HepG2 (cell line): ENCODE measurements at regions of chr2 and their contacts with region 1.

Region 1: GRCh38 chr2:129129096-129129495 is 810.4 kb upstream of the HS6ST1 start:
- DNase-seq: no peak
- ATAC-seq: no peak
- H3K4me3 ChIP-seq: no peak overlapping the region
- H3K27ac ChIP-seq: no peak overlapping the region
- H3K4me1 ChIP-seq: no peaks in the 10 kb centered on the region
- H3K27me3 ChIP-seq: peaks cover 0 to 3% of the 10 kb centered on the region in 2 experiments; a peak in 1 of 5 replicates
- CTCF ChIP-seq: no peak
- EP300 ChIP-seq: no peak
- POLR2A ChIP-seq: no peak
- RAD21 ChIP-seq: no peak

Region 2: GRCh38 chr2:129144082-129144791 is 15.1 kb after region 1 on chr2:
- CTCF ChIA-PET with region 1: no interaction called
- POLR2A ChIA-PET with region 1: no interaction called
- in situ Hi-C with region 1: no loop called
- intact Hi-C with region 1: loop called (anchors 1 kb)
- DNase-seq: no peak
- ATAC-seq: no peak
- H3K4me3 ChIP-seq: no peak overlapping the region
- H3K27ac ChIP-seq: no peak overlapping the region
- H3K4me1 ChIP-seq: no peaks in the 10 kb centered on the region
- H3K27me3 ChIP-seq: peaks cover 0 to 17% of the 10 kb centered on the region in 2 experiments; a peak in 2 of 5 replicates
- CTCF ChIP-seq: no peak
- EP300 ChIP-seq: no peak
- POLR2A ChIP-seq: no peak
- RAD21 ChIP-seq: no peak